ENCODE measurements at regions of chr17 and their contacts with region 1.

Region 1: GRCh38 chr17:2416010-2416734 is 15.3 kb upstream of the MNT start:
- DNase-seq: peak; percentile 93
- ATAC-seq: peak; percentile 75

Region 2: DNA sequence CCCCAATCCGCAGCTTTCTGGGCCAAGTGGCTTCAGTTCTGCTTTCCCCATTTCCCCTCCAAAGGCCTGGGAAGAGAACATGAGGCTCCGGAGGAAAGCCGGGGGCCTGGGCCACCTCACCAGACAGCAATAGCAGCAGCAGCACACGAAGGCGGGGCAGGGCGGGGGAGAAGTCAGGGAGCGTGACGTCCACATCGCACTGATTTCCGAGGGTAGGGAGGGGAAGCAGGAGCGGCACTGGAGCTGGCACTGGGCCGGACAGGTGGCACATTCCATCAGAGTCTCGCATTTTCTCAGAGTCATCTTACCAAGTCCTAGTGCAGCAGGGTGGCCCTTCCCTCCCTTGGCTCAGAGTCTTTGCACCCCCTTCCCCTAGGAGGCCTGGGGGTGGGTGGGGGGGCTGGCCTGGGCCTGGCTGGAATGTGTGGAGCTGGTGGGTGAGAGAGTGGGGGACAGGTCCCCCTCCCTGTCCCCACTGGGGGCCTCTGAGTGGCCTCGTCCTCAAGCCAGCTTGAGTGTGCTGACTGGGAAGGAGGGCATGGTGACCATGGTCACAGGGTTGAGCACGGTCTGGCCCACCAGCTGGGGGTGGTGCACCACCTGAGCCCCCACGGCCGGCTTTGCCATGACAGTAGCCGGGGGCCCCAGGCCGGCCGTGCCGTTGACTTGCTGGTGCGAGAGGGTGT is 29.6 kb before region 1 on chr17:
- intact Hi-C with region 1: loop called (anchors 1 kb)
- DNase-seq: no peak
- ATAC-seq: no peak

Region 3: DNA sequence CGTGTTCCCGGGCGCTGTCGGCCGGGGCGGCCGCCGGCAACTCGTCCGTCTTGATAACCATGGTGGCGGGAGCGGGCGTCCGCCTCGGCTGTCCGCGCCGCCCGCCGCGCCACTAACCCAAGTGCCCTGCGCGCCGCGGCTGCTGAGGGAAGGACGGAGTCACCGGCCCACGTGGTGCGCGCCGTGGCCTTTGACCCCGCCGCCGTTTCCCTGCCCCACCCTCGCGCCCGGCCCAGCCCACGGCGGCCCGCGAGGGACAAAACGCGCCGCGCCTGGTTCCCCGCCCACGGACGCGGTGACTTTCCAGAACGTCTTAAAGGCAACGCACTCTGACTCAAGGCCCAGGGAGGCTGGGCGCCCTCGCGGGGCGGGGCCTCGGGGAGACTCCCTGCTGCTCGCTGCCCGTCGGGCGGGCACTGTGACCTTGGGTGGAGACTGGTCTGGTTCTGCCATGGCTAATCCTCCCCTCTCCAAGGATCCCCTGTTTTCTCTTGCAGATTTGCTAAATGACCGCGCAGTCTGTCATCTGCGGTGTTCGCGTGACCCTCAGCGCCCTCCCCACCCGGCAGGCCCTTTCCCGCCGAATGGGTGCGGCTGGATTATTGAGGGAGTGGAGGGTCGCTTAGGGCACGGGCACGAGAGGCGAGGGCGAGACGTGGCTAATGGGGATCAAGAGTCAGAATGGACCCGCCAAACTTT is 295.6 kb after region 1 on chr17 and contains the start of gene CLUH:
- intact Hi-C with region 1: loop called (anchors 5 kb)
- DNase-seq: peak; percentile 99
- ATAC-seq: peak; percentile 89
- total RNA-seq, gene CLUH: 180 TPM